Kidney (tissue), 22 donors: ENCODE measurements at regions of chr1 and their contacts with region 1.

Region 1: GRCh38 chr1:2412519-2413233 is at the start of gene PEX10:
- DNase-seq: peak; percentile 98 to 99 (median 99)
- H3K4me3 ChIP-seq: peak within 1 kb of the TSS; percentile 56 to 79 (median 68)
- H3K27ac ChIP-seq: peak within 1 kb of the TSS; percentile 75 to 86
- H3K4me1 ChIP-seq: peaks cover 0 to 21% (median 12%) of the 10 kb centered on the region in 3 donors
- H3K27me3 ChIP-seq: no peaks in the 10 kb centered on the region
- CTCF ChIP-seq: no peak
- total RNA-seq, gene PEX10: 25.6 TPM

Region 2: DNA sequence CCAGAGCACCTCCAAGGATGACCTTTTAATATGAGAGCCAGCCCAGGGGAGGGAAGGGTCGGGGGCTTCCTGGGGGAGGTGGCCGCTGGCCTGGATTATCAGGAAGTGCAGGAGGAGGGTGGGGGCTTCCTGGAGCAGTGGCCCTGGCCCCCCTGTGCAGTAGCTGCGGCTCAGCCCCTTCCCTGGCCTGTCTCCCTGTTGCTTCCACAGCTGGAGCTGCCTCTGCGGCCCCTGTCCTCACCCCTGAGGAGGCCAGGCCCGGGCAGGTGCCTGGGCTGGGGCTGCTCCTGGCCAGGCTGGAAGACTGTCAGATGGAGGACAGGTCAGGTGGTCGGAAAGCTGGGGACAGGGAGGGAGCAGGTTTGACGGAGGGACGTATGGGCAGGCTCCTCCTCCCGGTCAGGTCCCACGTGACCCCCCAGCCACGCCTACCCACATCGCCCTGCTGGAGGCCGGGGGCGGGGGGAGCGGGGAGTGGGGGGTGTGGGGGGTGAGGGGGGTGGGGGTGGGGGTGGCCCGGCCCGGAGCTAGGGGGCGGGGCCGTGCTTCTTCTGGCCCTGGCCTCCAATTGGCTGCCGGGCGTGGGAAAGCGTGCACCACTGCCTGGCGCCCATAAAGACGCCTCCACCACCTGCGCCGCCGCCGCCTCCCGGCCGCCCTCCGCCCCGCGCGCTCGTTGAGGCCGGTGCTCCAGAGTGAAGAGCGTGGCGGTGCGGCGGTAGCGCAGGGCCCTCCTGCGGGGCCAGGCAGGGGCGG is 133.3 kb after region 1 on chr1:
- intact Hi-C with region 1: loop called (anchors 10 kb)
- DNase-seq: peak; percentile 93 to 97 (median 94)
- H3K4me3 ChIP-seq: peak overlapping the region in 2 of 3 donors; percentile 28 to 61
- H3K27ac ChIP-seq: peak overlapping the region; percentile 86 to 91
- H3K4me1 ChIP-seq: peaks cover 0 to 36% (median 18%) of the 10 kb centered on the region in 3 donors
- H3K27me3 ChIP-seq: no peaks in the 10 kb centered on the region
- CTCF ChIP-seq: no peak

Region 3: DNA sequence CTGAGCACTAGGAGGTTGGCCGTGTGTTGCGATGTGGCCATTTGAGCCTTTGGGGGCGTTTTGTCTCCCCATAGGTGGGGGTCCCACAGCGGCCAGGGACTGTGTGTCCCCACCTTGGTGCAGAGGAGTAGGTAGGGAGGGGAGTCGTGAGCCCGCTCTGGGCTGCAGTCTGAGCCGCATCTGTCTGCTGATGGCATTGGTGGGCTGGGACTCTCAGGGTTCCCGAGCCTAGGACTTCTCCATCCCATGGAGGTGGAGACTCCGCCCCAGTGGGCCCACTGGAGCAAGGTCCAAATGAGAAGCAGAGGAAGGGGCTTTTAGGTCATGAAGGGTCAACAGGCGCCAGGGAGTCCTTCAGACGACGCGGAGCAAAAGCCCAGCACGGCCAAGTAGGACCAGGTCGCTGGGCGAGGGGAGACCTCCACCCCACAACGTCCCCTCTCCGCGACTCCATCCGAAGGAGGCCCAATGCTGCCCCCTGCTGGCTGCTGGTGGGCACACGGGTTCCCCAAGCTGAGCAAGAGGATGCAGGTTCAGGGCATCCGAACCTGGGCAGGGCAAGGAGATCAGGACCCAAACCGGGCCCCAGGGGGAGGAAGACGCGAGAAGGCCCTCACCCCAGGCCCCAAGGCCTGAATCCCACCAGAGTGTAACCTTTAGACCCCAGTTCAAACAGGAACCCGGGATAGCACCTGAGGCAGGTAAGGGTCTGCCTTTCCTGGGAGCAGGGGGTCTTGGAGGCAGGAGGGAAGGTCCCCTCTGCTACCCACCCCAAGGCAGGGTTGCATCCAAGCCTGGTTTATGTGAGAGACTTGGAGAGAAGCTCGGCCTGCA is 373.9 kb after region 1 on chr1:
- intact Hi-C with region 1: loop called (anchors 5 kb)
- DNase-seq: peak; percentile 27 to 78 (median 50)
- H3K4me3 ChIP-seq: no peak overlapping the region
- H3K27ac ChIP-seq: no peak overlapping the region
- H3K4me1 ChIP-seq: no peaks in the 10 kb centered on the region
- H3K27me3 ChIP-seq: peaks cover 3% of the 10 kb centered on the region
- CTCF ChIP-seq: peak; percentile 60

Region 4: GRCh38 chr1:2805787-2806430 is 393.2 kb after region 1 on chr1:
- intact Hi-C with region 1: no loop called
- DNase-seq: peak in 1 of 5 donors; percentile 56
- H3K4me3 ChIP-seq: no peak overlapping the region
- H3K27ac ChIP-seq: no peak overlapping the region
- H3K4me1 ChIP-seq: no peaks in the 10 kb centered on the region
- H3K27me3 ChIP-seq: peaks cover 3% of the 10 kb centered on the region
- CTCF ChIP-seq: no peak